ENCODE measurements at regions of chr14 and their contacts with region 1.

Region 1: GRCh38 chr14:106174206-106174605 is 647.8 kb downstream of the TMEM121 start:
- DNase-seq: peak; percentile 54
- H3K4me3 Mint-ChIP-seq: peak overlapping the region; percentile 2
- H3K27ac Mint-ChIP-seq: peak overlapping the region; percentile 20
- H3K4me1 Mint-ChIP-seq: peaks cover 53% of the 10 kb centered on the region
- H3K27me3 Mint-ChIP-seq: peaks cover 30% of the 10 kb centered on the region

Region 2: DNA sequence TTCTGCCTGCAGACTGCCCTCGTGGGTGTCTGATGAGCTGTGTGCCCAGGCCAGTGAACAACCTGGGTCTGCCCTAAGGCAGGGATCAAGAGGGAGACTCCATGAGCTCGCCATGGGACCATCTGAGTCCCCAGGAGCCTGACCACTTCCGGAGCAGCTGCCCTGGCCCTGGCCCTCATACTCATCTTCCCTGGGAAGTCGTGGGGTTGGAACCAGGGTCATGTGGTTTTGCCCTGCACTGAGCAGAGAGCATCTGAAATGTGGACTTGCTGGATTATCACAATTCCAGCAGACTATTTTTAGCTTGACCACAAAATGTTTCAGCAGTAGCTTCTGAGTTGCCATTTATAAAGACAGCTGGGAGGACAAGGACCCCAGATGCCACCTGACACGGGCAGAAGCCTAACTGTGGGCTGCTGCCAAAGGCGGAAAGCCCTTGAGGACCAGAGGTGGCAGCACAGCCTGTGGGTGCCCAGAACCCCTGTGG is 919.1 kb before region 1 on chr14:
- intact Hi-C with region 1: no loop called
- DNase-seq: no peak
- H3K4me3 Mint-ChIP-seq: no peak overlapping the region
- H3K27ac Mint-ChIP-seq: no peak overlapping the region
- H3K4me1 Mint-ChIP-seq: peaks cover 14% of the 10 kb centered on the region
- H3K27me3 Mint-ChIP-seq: no peaks in the 10 kb centered on the region

Region 3: GRCh38 chr14:106080924-106081323 is 93.3 kb before region 1 on chr14:
- intact Hi-C with region 1: no loop called
- DNase-seq: no peak
- H3K4me3 Mint-ChIP-seq: no peak overlapping the region
- H3K27ac Mint-ChIP-seq: no peak overlapping the region
- H3K4me1 Mint-ChIP-seq: peaks cover 1% of the 10 kb centered on the region
- H3K27me3 Mint-ChIP-seq: peaks cover 41% of the 10 kb centered on the region

Region 4: GRCh38 chr14:106185837-106186233 is 11.6 kb after region 1 on chr14:
- intact Hi-C with region 1: loop called (anchors 1 kb)
- DNase-seq: peak; percentile 51
- H3K4me3 Mint-ChIP-seq: peak overlapping the region; percentile 46
- H3K27ac Mint-ChIP-seq: peak overlapping the region; percentile 32
- H3K4me1 Mint-ChIP-seq: peaks cover 34% of the 10 kb centered on the region
- H3K27me3 Mint-ChIP-seq: peaks cover 59% of the 10 kb centered on the region

Region 5: GRCh38 chr14:106200541-106201315 is 26.5 kb after region 1 on chr14:
- intact Hi-C with region 1: no loop called
- DNase-seq: no peak
- H3K4me3 Mint-ChIP-seq: peak overlapping the region; percentile 28
- H3K27ac Mint-ChIP-seq: no peak overlapping the region
- H3K4me1 Mint-ChIP-seq: peaks cover 22% of the 10 kb centered on the region
- H3K27me3 Mint-ChIP-seq: peaks cover 50% of the 10 kb centered on the region

Region 6: GRCh38 chr14:106302661-106303060 is 128.5 kb after region 1 on chr14:
- intact Hi-C with region 1: no loop called
- DNase-seq: no peak
- H3K4me3 Mint-ChIP-seq: no peak overlapping the region
- H3K27ac Mint-ChIP-seq: no peak overlapping the region
- H3K4me1 Mint-ChIP-seq: peaks cover 10% of the 10 kb centered on the region
- H3K27me3 Mint-ChIP-seq: peaks cover 13% of the 10 kb centered on the region

Measured in activated T-helper 1 cell treated with anti-CD3 and anti-CD28 coated beads, Interleukin-12 subunit alpha, Interleukin-12 subunit beta, Interleukin-2, Interleukin-4 antibody, amounts not matched to agents 30 ng/mL and 10 ng/mL and 1 ng/mL, durations not matched to agents 14 hours and 24 hours and 36 hours (primary cell).